HepG2 (cell line): ENCODE measurements at regions of chr11 and their contacts with region 1.

Region 1: DNA sequence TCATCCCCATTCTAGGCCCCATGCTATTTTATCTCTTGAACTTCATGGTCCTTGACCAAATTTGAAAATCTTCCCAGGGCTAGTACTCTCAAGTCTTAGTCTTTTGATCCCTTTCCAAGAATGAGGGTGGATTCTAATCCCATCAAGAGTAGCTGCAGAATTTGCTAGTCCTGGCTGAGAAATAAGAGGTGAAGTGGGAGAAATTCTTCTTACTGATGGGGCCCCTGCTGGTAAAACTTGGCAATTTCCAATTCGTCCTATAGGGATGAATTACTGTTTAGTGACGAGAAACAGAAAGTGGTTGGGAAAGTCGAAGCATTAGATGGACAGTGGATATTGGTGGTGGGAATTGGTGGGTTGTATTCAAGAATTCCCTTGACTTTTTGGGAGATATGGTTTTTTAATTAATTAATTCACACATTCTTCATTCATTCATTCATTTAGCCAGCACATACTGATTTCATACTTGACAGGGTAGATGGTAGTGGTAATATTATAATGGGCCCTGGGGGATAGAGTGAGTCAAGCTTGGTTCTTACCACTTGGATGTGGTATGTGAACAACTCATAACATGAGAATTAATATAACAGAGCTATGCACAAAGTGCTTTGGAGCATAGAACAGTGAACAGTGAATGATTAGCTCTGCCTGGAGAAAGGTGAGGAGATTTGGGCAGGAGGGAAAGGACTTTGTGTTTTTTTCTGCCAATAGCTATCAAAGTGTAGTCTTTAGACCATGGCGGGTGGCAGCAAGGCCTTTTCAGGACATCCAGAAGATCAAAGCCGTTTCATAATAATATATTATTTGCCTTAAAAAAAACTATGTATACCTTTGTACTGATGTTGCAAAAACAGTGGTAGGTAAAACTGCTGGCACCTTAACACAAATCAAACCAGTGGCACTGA is 103.8 kb downstream of the STIM1 start:
- DNase-seq: peak; percentile 86
- ATAC-seq: peak; percentile 93
- H3K4me3 ChIP-seq: peak overlapping the region in 1 of 3 experiments; percentile 13; a peak in 1 of 6 replicates
- H3K27ac ChIP-seq: peak overlapping the region; percentile 46
- H3K4me1 ChIP-seq: peaks cover 66% of the 10 kb centered on the region
- H3K27me3 ChIP-seq: no peaks in the 10 kb centered on the region
- CTCF ChIP-seq: no peak; the same call in 1 of the 2 replicates
- EP300 ChIP-seq: peak in 1 of 2 experiments; percentile 59; a peak in 1 of 4 replicates
- POLR2A ChIP-seq: no peak
- RAD21 ChIP-seq: no peak

Region 2: GRCh38 chr11:4065601-4066377 is 106.5 kb after region 1 on chr11:
- CTCF ChIA-PET with region 1: no interaction called
- POLR2A ChIA-PET with region 1: no interaction called
- in situ Hi-C with region 1: loop called (anchors 10 kb)
- intact Hi-C with region 1: no loop called
- DNase-seq: no peak
- ATAC-seq: no peak
- H3K4me3 ChIP-seq: no peak overlapping the region
- H3K27ac ChIP-seq: no peak overlapping the region
- H3K4me1 ChIP-seq: peaks cover 3% of the 10 kb centered on the region
- H3K27me3 ChIP-seq: no peaks in the 10 kb centered on the region
- CTCF ChIP-seq: no peak
- EP300 ChIP-seq: no peak
- POLR2A ChIP-seq: no peak
- RAD21 ChIP-seq: no peak